ENCODE measurements at regions of chr16 and their contacts with region 1.

Region 1: GRCh38 chr16:71564155-71564967 is 12.5 kb downstream of the TAT start:
- DNase-seq: no peak
- ATAC-seq: peak; percentile 81
- H3K4me3 ChIP-seq: peak overlapping the region in 4 of 5 experiments; percentile 48 to 73 (median 59)
- H3K4me3 Mint-ChIP-seq: peak overlapping the region; percentile 83
- H3K27ac ChIP-seq: peak overlapping the region; percentile 99
- H3K27ac Mint-ChIP-seq: peak overlapping the region; percentile 94
- H3K4me1 ChIP-seq: peaks cover 33 to 34% of the 10 kb centered on the region in 2 donors
- H3K4me1 Mint-ChIP-seq: peaks cover 34% of the 10 kb centered on the region
- H3K27me3 ChIP-seq: no peaks in the 10 kb centered on the region
- H3K27me3 Mint-ChIP-seq: no peaks in the 10 kb centered on the region
- CTCF ChIP-seq: no peak

Region 2: DNA sequence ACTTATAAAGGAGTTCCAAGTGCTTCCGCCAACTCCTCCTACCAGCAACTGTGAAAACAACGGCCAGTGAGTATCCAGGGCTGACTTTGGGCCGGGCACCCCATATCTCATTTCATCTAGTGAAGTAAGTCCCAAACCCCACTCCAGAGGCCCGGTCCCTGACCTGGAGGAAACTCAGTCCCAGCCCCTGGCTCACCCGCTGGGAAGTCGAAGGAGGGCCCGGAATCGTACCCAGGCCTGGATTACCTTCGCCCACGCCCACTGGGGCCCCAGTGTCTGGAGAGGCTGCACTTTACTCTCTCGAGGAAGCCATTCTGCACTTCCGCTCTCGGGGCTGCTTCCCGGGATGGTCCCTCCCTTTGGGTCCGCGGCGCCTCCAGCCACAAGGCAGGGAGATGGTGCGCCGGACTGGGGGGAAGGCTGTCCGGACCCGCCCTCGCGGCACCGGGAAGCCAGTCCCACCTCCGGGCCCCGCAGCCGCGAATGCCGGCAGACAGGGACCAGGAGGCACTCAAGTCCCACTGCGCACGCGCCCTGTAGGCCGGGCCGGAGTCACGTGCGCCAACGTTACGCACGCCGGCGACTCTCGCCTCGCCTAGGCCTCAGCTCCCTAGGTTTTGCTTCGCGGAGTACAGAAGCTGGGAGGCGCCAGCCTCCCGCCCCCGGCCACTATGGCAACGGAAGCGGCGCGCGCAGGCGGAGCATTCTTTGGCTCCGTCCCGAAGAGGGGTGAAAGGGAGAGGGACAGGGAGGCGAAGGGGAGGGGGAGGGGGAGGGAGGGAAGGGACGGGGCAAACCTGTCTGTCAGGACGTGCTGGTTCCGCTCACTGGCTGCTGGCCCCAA is 275.2 kb before region 1 on chr16 and contains the start of gene CMTR2:
- CTCF ChIA-PET with region 1: no interaction called
- POLR2A ChIA-PET with region 1: no interaction called
- intact Hi-C with region 1: loop called (anchors 2 kb)
- DNase-seq: peak; percentile 95
- ATAC-seq: peak; percentile 85
- H3K4me3 ChIP-seq: peak within 1 kb of the TSS; percentile 61 to 97 (median 67)
- H3K4me3 Mint-ChIP-seq: peak within 1 kb of the TSS; percentile 93
- H3K27ac ChIP-seq: peak within 1 kb of the TSS; percentile 84 to 94
- H3K27ac Mint-ChIP-seq: peak within 1 kb of the TSS; percentile 97
- H3K4me1 ChIP-seq: peaks cover 14 to 16% of the 10 kb centered on the region in 2 donors
- H3K4me1 Mint-ChIP-seq: peaks cover 32% of the 10 kb centered on the region
- H3K27me3 ChIP-seq: peaks cover 0 to 10% (median 5%) of the 10 kb centered on the region in 4 experiments
- H3K27me3 Mint-ChIP-seq: peaks cover 19% of the 10 kb centered on the region
- CTCF ChIP-seq: no peak
- total RNA-seq, gene CMTR2: 41.3 and 46.1 TPM in 2 replicates

Region 3: DNA sequence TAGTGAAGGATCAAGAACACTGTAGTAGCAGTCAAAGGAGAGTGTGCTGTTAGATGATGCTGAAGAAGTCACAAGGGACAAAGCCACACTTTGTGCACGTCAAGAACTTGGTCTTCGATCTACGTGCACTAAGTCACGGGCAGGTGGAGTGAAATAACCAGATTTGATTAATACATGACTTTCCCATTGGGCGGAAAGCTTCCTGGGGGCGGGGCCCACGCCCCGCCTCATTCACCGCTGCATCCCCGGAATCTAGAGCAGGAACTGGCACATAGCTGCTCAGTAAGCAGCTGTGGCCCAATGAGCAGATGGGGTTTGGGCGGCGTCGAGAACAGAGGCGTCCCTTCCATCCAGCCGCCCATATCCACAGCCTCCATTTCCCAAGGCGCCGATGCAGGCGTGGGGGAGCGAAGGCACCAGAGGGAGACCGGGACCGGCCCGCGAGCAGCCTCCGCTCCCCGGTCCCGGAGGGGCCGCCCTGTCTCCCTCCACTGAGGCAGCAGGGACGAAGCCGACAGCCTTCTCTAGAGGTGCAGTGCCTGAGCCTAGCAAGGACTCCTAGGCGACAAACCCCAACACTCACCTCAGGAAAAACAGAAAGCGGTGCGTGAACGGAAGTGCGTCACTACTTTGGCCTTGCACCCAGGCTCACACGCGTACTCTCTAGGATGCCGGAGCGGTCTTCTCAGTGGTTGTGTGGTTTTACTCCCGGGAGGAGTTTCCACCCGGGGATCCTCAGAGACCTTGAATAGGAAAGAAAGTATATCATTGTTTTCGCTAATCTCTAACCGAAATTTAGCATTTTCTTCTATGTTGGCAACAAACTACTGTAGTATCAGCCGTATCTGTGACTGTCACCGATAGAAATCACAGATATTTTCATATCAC is 80.1 kb before region 1 on chr16:
- CTCF ChIA-PET with region 1: interaction called, 6 read pairs
- POLR2A ChIA-PET with region 1: interaction called, 4 read pairs
- intact Hi-C with region 1: loop called (anchors 1 kb)
- DNase-seq: peak; percentile 95
- ATAC-seq: peak; percentile 85
- H3K4me3 ChIP-seq: peak overlapping the region; percentile 57 to 96 (median 89)
- H3K4me3 Mint-ChIP-seq: peak overlapping the region; percentile 89
- H3K27ac ChIP-seq: peak overlapping the region; percentile 99 to 100
- H3K27ac Mint-ChIP-seq: peak overlapping the region; percentile 93
- H3K4me1 ChIP-seq: peaks cover 9 to 12% of the 10 kb centered on the region in 2 donors
- H3K4me1 Mint-ChIP-seq: peaks cover 15% of the 10 kb centered on the region
- H3K27me3 ChIP-seq: no peaks in the 10 kb centered on the region
- H3K27me3 Mint-ChIP-seq: peaks cover 7% of the 10 kb centered on the region
- CTCF ChIP-seq: no peak

Region 4: GRCh38 chr16:71537643-71538042 is 26.7 kb before region 1 on chr16:
- CTCF ChIA-PET with region 1: interaction called, 29 read pairs
- POLR2A ChIA-PET with region 1: no interaction called
- intact Hi-C with region 1: loop called (anchors 1 kb)
- DNase-seq: peak; percentile 64
- ATAC-seq: peak; percentile 73
- H3K4me3 ChIP-seq: no peak overlapping the region
- H3K4me3 Mint-ChIP-seq: no peak overlapping the region
- H3K27ac ChIP-seq: no peak overlapping the region
- H3K27ac Mint-ChIP-seq: no peak overlapping the region
- H3K4me1 ChIP-seq: peaks cover 13 to 15% of the 10 kb centered on the region in 2 donors
- H3K4me1 Mint-ChIP-seq: peaks cover 15% of the 10 kb centered on the region
- H3K27me3 ChIP-seq: peaks cover 0 to 7% (median 2%) of the 10 kb centered on the region in 4 experiments
- H3K27me3 Mint-ChIP-seq: peaks cover 13% of the 10 kb centered on the region
- CTCF ChIP-seq: peak; percentile 80

Region 5: DNA sequence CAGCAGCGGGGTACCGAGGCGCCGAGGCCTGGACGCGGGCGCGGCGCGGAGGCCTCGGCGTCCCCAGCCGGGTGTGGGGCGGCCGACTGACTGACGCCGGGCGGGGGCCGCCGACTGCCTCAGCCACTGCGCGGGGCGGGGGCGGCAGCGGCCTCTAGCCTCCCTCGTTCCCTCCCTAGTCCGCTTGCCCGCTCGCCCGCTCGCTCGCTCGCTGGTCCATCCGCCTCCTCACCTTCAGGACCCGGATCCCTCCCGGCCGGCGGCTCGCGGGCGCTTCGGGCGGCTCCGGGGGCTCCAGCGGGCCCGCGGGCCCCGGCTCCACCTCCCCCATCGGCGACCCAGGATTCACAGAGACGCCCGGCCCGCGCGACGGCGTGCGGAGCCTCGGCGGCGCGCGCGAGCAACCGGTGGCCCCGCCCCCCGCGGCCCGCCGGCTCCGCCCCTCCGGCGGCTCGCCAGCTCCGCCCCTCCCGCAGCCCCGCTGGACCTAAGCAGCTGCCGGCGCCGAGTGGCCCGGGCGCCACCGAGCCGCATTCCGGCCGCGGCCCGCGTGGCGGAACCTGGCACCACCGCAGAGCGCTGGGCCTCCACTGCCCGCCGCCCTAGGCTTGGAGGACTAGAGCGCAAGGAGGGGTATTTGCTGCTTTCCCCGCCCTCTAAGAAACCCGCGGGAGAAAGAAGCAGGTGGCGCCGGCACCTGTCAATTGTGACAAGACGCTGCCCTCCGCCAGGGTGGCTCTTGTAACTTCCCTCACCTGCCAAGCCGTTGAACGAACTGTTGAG is 159.4 kb after region 1 on chr16:
- CTCF ChIA-PET with region 1: interaction called, 12 read pairs
- POLR2A ChIA-PET with region 1: interaction called, 3 read pairs
- intact Hi-C with region 1: loop called (anchors 1 kb)
- DNase-seq: peak; percentile 94
- ATAC-seq: peak; percentile 83
- H3K4me3 ChIP-seq: peak overlapping the region; percentile 21 to 80 (median 74)
- H3K4me3 Mint-ChIP-seq: peak overlapping the region; percentile 99
- H3K27ac ChIP-seq: peak overlapping the region; percentile 52 to 85
- H3K27ac Mint-ChIP-seq: peak overlapping the region; percentile 95
- H3K4me1 ChIP-seq: peaks cover 46 to 48% of the 10 kb centered on the region in 2 donors
- H3K4me1 Mint-ChIP-seq: peaks cover 48% of the 10 kb centered on the region
- H3K27me3 ChIP-seq: no peaks in the 10 kb centered on the region
- H3K27me3 Mint-ChIP-seq: no peaks in the 10 kb centered on the region
- CTCF ChIP-seq: peak; percentile 18

Region 6: DNA sequence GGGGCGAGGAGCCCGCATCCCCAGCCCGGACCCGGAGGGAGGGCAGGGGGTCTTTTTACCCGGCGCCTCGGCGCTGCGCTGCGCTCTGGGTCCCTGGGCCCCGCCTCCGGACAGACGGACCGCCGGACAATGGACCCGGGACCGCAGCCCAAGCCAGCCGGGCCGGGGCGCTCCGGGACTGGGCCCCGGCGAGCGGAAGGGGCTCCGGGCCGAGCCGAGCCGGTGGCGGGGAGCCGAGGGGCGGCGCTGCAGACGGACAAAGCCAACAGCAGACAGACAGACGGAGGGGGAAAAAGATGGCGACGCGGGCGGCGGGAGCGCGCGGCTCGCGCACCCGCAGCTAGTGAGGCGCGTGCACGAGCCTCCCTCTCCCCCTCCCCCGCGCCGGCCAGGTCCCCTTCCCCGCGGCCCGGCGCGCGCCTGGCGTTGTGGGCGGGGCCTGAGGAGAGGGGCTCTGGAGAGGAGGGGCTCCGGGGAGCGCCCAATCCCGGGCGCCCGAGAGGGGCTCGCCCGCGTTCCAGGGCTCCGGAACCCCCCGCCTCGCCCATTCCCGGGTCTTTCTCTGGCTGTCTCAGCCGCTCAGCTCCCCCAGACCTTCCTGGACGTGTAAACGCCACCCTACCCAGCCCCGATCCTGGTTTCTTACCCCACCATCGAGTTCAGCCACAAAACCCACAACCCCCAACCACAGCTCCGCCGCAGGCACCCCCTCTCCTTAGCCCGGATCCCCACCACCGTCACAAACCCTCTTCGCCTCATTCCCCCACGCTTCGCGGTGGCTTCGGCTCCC is 319.7 kb after region 1 on chr16 and contains the start of gene ZNF821:
- CTCF ChIA-PET with region 1: no interaction called
- POLR2A ChIA-PET with region 1: no interaction called
- intact Hi-C with region 1: no loop called
- DNase-seq: peak; percentile 89
- ATAC-seq: peak; percentile 69
- H3K4me3 ChIP-seq: peak within 1 kb of the TSS; percentile 76 to 98 (median 86)
- H3K4me3 Mint-ChIP-seq: peak within 1 kb of the TSS; percentile 96
- H3K27ac ChIP-seq: peak within 1 kb of the TSS; percentile 89 to 91
- H3K27ac Mint-ChIP-seq: peak within 1 kb of the TSS; percentile 96
- H3K4me1 ChIP-seq: peaks cover 33 to 43% of the 10 kb centered on the region in 2 donors
- H3K4me1 Mint-ChIP-seq: peaks cover 43% of the 10 kb centered on the region
- H3K27me3 ChIP-seq: no peaks in the 10 kb centered on the region
- H3K27me3 Mint-ChIP-seq: no peaks in the 10 kb centered on the region
- CTCF ChIP-seq: peak; percentile 66
- total RNA-seq, gene ZNF821: 31.2 and 35.6 TPM in 2 replicates

Region 7: DNA sequence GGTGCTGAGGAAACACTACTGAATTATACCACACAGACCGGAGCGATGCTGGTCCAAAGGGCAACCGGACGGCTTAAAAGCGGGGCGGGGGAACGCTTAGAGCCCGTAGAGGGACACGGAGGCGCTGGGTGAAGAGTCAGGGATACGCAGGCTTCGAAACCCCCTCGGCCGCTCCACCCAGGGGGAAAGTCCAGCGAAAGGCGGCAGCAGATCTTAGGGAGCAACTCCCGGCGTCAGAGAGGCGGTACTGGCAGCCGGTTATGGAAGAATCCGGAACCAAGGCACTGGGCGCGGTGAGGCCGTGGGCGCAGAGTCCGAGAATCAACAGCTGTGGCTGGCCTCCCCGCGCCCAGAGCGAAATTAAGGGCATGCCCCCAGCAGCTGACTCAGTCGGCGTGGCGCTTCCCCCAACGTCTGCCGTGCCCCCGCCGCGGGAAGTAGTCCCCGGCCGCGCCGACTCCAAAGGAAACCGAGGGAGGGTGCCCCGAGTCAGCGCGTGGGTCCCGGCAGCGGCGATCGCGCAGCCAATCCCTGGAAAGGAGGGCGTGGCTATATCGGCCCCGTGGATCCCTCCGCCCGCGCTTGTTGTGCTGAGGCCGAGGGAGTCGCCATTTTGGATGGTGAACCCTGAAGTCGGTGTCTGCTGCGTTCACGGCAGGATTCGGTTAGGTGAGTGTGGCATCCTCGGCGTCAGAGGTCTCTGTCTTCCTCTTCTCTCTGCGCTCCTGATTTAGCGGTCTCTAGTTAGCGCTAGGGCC is 330.7 kb after region 1 on chr16 and contains the start of gene IST1:
- CTCF ChIA-PET with region 1: no interaction called
- POLR2A ChIA-PET with region 1: interaction called, 3 read pairs
- intact Hi-C with region 1: loop called (anchors 5 kb)
- DNase-seq: peak; percentile 98
- ATAC-seq: peak; percentile 91
- H3K4me3 ChIP-seq: peak within 1 kb of the TSS; percentile 93 to 100 (median 99)
- H3K4me3 Mint-ChIP-seq: peak within 1 kb of the TSS; percentile 97
- H3K27ac ChIP-seq: peak within 1 kb of the TSS; percentile 83 to 88
- H3K27ac Mint-ChIP-seq: peak within 1 kb of the TSS; percentile 98
- H3K4me1 ChIP-seq: peaks cover 16 to 39% of the 10 kb centered on the region in 2 donors
- H3K4me1 Mint-ChIP-seq: peaks cover 22% of the 10 kb centered on the region
- H3K27me3 ChIP-seq: no peaks in the 10 kb centered on the region
- H3K27me3 Mint-ChIP-seq: no peaks in the 10 kb centered on the region
- CTCF ChIP-seq: no peak
- total RNA-seq, gene IST1: 268 and 302 TPM in 2 replicates

Measured in B cell (primary cell).